Activated CD8-positive, alpha-beta T cell treated with anti-CD3 and anti-CD28 coated beads for 36 hours (primary cell): ENCODE measurements at regions of chr12 and their contacts with region 1.

Region 1: DNA sequence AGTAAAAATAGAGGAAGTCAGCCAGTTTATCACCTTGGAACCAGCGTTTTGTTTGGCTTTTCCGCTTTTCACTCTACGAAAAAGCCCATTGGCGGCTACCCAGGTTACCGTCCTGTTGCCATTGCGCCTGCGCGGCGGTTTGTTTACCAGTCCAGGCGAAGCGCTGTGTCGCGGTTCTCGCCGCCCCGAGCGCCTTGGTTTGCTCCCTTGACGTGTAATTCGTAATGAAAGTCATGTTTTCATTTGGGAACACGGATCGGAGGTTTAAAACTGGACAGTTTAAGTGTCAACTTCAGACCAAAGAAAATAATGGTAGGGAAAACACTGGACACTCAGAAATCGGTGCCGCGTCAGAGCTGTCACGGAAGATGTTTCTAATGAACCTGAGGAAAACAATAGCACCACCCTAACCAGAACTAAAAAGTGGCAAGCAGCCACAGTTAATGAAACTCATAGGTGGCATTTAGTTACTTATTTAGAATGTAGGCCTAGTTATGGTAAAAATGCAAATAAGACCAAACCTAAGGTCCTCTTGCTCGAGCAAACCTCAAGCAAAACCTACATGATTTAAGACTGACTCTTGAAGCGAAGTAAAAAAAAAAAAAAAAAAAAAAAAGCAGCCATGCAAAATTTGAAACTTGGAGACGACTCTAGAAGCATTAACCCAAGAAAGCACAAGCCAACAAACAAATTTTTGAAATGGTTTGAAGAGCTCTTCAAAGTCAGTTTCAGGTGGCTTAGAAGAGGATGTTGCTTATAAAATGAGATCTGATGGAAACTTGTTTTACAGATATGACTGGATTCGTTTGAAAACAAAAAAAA is 790 bp upstream of the GPR19 start:
- DNase-seq: peak; percentile 91
- ATAC-seq: peak; percentile 77
- H3K4me3 Mint-ChIP-seq: peak overlapping the region; percentile 87
- H3K27ac Mint-ChIP-seq: peak overlapping the region; percentile 99
- H3K4me1 Mint-ChIP-seq: peaks cover 37% of the 10 kb centered on the region
- H3K27me3 Mint-ChIP-seq: no peaks in the 10 kb centered on the region
- CTCF ChIP-seq: no peak

Region 2: GRCh38 chr12:12611512-12612306 is 85.1 kb before region 1 on chr12 and contains the start of gene CREBL2:
- CTCF ChIA-PET with region 1: no interaction called
- POLR2A ChIA-PET with region 1: no interaction called
- intact Hi-C with region 1: loop called (anchors 5 kb)
- DNase-seq: peak; percentile 92
- ATAC-seq: peak; percentile 81
- H3K4me3 Mint-ChIP-seq: peak within 1 kb of the TSS; percentile 83
- H3K27ac Mint-ChIP-seq: peak within 1 kb of the TSS; percentile 99
- H3K4me1 Mint-ChIP-seq: peaks cover 52% of the 10 kb centered on the region
- H3K27me3 Mint-ChIP-seq: no peaks in the 10 kb centered on the region
- CTCF ChIP-seq: no peak
- total RNA-seq, gene CREBL2: 12.7 to 14.9 TPM

Region 3: DNA sequence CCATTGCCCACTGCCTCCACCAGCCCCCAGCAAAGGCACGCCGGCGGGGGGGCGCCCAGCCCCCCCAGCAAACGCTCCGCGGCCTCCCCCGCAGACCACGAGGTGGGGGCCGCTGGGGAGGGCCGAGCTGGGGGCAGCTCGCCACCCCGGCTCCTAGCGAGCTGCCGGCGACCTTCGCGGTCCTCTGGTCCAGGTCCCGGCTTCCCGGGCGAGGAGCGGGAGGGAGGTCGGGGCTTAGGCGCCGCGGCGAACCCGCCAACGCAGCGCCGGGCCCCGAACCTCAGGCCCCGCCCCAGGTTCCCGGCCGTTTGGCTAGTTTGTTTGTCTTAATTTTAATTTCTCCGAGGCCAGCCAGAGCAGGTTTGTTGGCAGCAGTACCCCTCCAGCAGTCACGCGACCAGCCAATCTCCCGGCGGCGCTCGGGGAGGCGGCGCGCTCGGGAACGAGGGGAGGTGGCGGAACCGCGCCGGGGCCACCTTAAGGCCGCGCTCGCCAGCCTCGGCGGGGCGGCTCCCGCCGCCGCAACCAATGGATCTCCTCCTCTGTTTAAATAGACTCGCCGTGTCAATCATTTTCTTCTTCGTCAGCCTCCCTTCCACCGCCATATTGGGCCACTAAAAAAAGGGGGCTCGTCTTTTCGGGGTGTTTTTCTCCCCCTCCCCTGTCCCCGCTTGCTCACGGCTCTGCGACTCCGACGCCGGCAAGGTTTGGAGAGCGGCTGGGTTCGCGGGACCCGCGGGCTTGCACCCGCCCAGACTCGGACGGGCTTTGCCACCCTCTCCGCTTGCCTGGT is 20.2 kb after region 1 on chr12 and contains the start of gene CDKN1B:
- CTCF ChIA-PET with region 1: interaction called, 33 read pairs
- POLR2A ChIA-PET with region 1: interaction called, 151 read pairs
- intact Hi-C with region 1: loop called (anchors 2 kb)
- DNase-seq: peak; percentile 91
- ATAC-seq: peak; percentile 72
- H3K4me3 Mint-ChIP-seq: peak within 1 kb of the TSS; percentile 86
- H3K27ac Mint-ChIP-seq: peak within 1 kb of the TSS; percentile 98
- H3K4me1 Mint-ChIP-seq: peaks cover 44% of the 10 kb centered on the region
- H3K27me3 Mint-ChIP-seq: no peaks in the 10 kb centered on the region
- CTCF ChIP-seq: no peak
- total RNA-seq, gene CDKN1B: 39.9 to 40.8 TPM

Region 4: GRCh38 chr12:12724661-12725545 is 28.1 kb after region 1 on chr12:
- CTCF ChIA-PET with region 1: interaction called, 3 read pairs
- POLR2A ChIA-PET with region 1: interaction called, 151 read pairs
- intact Hi-C with region 1: no loop called
- DNase-seq: peak; percentile 96
- ATAC-seq: peak; percentile 61
- H3K4me3 Mint-ChIP-seq: peak overlapping the region; percentile 86
- H3K27ac Mint-ChIP-seq: peak overlapping the region; percentile 99
- H3K4me1 Mint-ChIP-seq: peaks cover 44% of the 10 kb centered on the region
- H3K27me3 Mint-ChIP-seq: no peaks in the 10 kb centered on the region
- CTCF ChIP-seq: no peak